ENCODE measurements at regions of chr22 and their contacts with region 1.

Region 1: GRCh38 chr22:22397277-22397870 is 111.2 kb downstream of the ZNF280B start:
- DNase-seq: no peak
- ATAC-seq: no peak
- H3K4me3 ChIP-seq: no peak overlapping the region
- H3K4me3 Mint-ChIP-seq: no peak overlapping the region
- H3K27ac ChIP-seq: no peak overlapping the region
- H3K27ac Mint-ChIP-seq: no peak overlapping the region
- H3K4me1 ChIP-seq: no peaks in the 10 kb centered on the region
- H3K4me1 Mint-ChIP-seq: no peaks in the 10 kb centered on the region
- H3K27me3 ChIP-seq: no peaks in the 10 kb centered on the region
- H3K27me3 Mint-ChIP-seq: peaks cover 0 to 32% (median 3%) of the 10 kb centered on the region in 5 donors

Region 2: DNA sequence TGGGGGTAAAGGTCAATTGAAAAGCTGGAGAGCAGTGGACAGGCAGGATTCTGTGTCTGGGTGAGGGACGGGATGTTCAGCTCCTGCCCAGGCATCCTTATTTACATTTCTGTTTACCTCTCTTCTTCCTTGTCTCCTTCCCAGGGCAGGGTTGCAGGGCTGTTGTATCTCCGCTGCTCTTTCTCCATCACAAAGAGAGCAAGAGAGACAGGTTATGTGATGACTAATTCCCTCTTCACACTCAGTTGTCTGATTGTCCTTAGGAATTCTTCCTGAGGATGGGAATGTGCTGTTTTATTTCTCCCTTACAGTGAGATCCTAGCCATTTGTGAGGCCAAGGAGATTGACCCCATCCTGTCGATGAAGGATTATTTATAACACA is 47.9 kb before region 1 on chr22:
- CTCF ChIA-PET with region 1: no interaction called
- POLR2A ChIA-PET with region 1: no interaction called
- intact Hi-C with region 1: loop called in 1 of 2 experiments (anchors 1 kb)
- DNase-seq: no peak
- ATAC-seq: no peak
- H3K4me3 ChIP-seq: no peak overlapping the region
- H3K4me3 Mint-ChIP-seq: no peak overlapping the region
- H3K27ac ChIP-seq: no peak overlapping the region
- H3K27ac Mint-ChIP-seq: no peak overlapping the region
- H3K4me1 ChIP-seq: no peaks in the 10 kb centered on the region
- H3K4me1 Mint-ChIP-seq: peaks cover 0 to 6% (median 0%) of the 10 kb centered on the region in 7 donors
- H3K27me3 ChIP-seq: no peaks in the 10 kb centered on the region
- H3K27me3 Mint-ChIP-seq: peaks cover 23 to 49% (median 27%) of the 10 kb centered on the region in 5 donors

Region 3: DNA sequence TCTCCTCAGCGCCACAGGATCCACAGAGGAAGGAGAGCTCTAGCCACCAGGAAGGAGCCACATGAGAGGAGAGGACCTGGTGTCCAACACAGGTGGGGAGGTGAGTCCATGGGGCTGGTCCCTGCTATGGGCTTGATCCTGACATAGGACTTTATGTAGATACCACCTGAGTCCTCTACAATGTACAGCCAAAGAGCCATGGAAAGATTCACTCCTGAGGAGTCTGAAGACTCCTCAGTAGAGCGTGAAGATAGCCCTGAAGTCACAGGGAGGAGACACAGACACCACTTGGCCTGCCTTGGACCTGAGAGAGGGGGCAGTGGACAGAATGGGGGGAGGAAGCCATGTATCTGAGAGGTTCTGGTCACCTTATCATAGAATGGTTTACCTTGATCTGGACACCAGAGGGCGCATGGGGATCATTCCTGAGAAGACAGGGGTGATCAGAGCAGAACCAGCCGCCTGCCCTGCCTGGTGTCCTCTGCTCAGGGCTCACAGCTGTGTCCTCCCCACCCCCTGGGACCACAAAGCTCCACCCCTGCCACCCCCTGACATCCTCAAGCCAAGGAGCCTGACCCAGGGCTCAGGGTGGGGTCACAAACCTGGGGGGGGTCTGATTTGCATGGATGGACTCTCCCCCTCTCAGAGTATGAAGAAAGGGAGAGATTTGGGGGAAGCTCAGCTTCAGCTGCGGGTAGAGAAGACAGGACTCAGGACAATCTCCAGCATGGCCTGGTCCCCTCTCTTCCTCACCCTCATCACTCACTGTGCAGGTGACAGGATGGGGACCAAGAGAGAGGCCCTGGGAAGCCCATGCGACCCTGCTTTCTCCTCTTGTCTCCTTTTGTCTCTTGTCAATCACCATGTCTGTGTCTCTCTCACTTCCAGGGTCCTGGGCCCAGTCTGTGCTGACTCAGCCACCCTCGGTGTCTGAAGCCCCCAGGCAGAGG is 34.2 kb after region 1 on chr22:
- CTCF ChIA-PET with region 1: no interaction called
- POLR2A ChIA-PET with region 1: no interaction called
- intact Hi-C with region 1: no loop called
- DNase-seq: peak in 7 of 9 donors; percentile 25 to 58 (median 30)
- ATAC-seq: peak; percentile 74
- H3K4me3 ChIP-seq: no peak overlapping the region
- H3K4me3 Mint-ChIP-seq: no peak overlapping the region
- H3K27ac ChIP-seq: no peak overlapping the region
- H3K27ac Mint-ChIP-seq: no peak overlapping the region
- H3K4me1 ChIP-seq: no peaks in the 10 kb centered on the region
- H3K4me1 Mint-ChIP-seq: peaks cover 0 to 4% (median 0%) of the 10 kb centered on the region in 7 donors
- H3K27me3 ChIP-seq: no peaks in the 10 kb centered on the region
- H3K27me3 Mint-ChIP-seq: peaks cover 0 to 27% (median 12%) of the 10 kb centered on the region in 5 donors